ENCODE measurements at regions of chr10 and their contacts with region 1.

Region 1: GRCh38 chr10:119006451-119007210 is 22.9 kb upstream of the NANOS1 start:
- DNase-seq: peak; percentile 94
- H3K4me3 ChIP-seq: no peak overlapping the region
- H3K27me3 ChIP-seq: peaks cover 15% of the 10 kb centered on the region
- CTCF ChIP-seq: peak; percentile 17; the same call in 1 of the 2 replicates

Region 2: DNA sequence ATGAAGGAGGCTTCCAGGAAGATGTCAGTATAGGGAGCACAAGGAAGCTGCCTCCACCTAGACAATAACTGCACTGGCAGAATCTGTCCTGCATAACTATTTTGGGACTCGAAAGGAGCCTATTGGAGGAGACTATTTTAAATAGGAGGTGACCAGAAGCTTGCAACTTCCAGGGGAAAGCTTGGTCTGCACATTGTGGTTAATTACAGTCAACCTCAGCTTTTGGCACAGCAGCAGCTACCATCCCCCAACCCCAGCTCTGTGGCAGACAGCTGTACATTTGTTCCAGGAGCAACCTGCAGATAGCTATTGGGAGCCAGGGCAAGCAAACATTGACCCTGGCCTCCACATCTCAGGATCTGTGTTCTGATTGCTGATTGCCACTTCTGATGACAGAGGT is 23.4 kb before region 1 on chr10:
- CTCF ChIA-PET with region 1: no interaction called
- POLR2A ChIA-PET with region 1: no interaction called
- DNase-seq: no peak
- H3K4me3 ChIP-seq: no peak overlapping the region
- H3K27me3 ChIP-seq: peaks cover 4% of the 10 kb centered on the region
- CTCF ChIP-seq: no peak

Region 3: DNA sequence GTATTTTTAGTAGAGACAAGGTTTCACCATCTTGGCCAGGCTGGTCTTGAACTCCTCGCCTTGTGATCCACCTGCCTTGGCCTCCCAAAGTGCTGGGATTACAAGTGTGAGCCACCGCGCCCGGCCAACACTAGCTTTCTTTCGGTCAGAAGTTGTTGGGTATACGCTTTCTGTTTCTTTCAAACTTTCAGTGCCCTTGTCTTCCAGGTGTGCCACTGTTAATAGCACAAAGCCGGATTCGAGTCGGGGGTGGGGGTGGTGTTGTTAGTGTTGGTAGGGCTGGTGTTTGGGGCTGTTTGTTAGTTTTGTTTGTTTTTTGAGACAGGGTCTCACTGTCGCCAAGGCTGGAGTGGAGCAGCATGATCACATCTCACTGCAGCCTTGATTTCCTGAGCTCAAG is 10.9 kb before region 1 on chr10:
- CTCF ChIA-PET with region 1: interaction called, 3 read pairs
- POLR2A ChIA-PET with region 1: interaction called, 17 read pairs
- DNase-seq: no peak
- H3K4me3 ChIP-seq: no peak overlapping the region
- H3K27me3 ChIP-seq: peaks cover 12% of the 10 kb centered on the region
- CTCF ChIP-seq: no peak

Measured in BJ (cell line).